ENCODE measurements at regions of chr7 and their contacts with region 1.

Region 1: GRCh38 chr7:92134271-92135051 is at the start of gene CYP51A1:
- DNase-seq: peak; percentile 93 to 94
- H3K4me3 ChIP-seq: peak within 1 kb of the TSS; percentile 99
- H3K4me3 Mint-ChIP-seq: peak within 1 kb of the TSS; percentile 95
- H3K27ac Mint-ChIP-seq: peak within 1 kb of the TSS; percentile 98
- H3K4me1 ChIP-seq: peaks cover 9% of the 10 kb centered on the region; the same call in 1 of the 2 replicates
- H3K4me1 Mint-ChIP-seq: peaks cover 18% of the 10 kb centered on the region
- H3K27me3 ChIP-seq: no peaks in the 10 kb centered on the region
- H3K27me3 Mint-ChIP-seq: no peaks in the 10 kb centered on the region
- CTCF ChIP-seq: peak in 1 of 2 experiments; percentile 6
- total RNA-seq, gene CYP51A1: 151 and 153 TPM in 2 replicates

Region 2: DNA sequence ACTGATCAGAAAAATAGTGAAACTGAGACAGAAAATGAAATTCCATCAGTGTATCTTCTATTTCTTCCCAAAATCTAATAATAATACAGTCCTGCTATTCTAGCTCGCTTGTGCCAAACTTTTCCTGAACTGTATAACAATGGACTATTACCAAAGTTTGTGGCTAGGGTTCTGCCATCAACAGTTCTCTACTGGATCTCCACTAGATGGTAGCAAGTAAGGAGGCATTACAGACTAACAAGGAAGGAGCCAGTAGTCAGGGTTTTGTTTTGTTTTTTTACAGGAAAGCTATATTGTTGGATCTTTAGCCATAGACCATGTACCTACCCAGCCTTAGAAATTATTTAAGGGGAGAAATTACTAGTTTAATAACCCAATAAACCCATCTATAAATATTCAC is 264.8 kb before region 1 on chr7:
- CTCF ChIA-PET with region 1: no interaction called
- POLR2A ChIA-PET with region 1: no interaction called
- intact Hi-C with region 1: no loop called
- DNase-seq: no peak
- H3K4me3 ChIP-seq: no peak overlapping the region
- H3K4me3 Mint-ChIP-seq: no peak overlapping the region
- H3K27ac Mint-ChIP-seq: no peak overlapping the region
- H3K4me1 ChIP-seq: no peaks in the 10 kb centered on the region
- H3K4me1 Mint-ChIP-seq: no peaks in the 10 kb centered on the region
- H3K27me3 ChIP-seq: no peaks in the 10 kb centered on the region
- H3K27me3 Mint-ChIP-seq: no peaks in the 10 kb centered on the region
- CTCF ChIP-seq: no peak

Region 3: DNA sequence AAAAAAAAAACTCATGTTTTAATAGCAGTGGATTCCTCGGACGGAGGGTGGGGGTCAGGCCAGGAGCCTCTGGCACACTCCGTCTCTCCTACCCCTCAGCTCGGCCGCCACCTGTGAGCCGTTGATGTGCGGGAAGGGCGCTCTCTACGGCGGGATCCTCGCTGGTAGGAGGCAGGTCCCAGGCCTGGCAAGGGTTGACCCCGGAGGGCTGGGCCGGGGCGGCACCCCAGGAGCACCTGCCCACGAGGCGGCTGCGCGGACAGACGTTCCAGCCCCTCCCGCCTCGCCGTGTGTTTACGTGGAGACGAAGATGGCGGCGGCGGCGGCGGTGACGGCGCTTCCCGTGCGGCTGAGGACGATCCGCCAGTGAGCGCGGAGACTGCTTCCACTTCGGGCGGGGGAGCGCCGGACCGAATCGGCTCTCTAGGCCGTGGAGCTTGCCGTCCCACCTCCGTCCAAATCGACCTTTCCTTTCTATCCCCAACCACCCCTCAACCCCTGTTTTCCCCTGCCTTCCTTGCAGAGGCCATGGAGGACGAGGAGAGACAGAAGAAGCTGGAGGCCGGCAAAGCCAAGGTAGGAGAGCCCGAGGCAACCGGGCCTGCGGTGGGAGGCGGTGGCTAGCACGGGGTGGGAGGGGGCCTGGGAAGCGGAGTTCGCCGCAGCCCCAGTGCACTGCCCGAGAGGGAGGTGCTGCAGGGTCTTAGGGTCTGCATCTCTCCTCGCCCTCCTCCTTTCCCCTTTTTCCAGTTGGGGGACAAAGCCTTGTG is 193.7 kb before region 1 on chr7 and contains the start of gene AKAP9:
- CTCF ChIA-PET with region 1: interaction called, 5 read pairs
- POLR2A ChIA-PET with region 1: no interaction called
- intact Hi-C with region 1: loop called (anchors 1 kb)
- DNase-seq: peak; percentile 95 to 96
- H3K4me3 ChIP-seq: peak within 1 kb of the TSS; percentile 76
- H3K4me3 Mint-ChIP-seq: peak within 1 kb of the TSS; percentile 95
- H3K27ac Mint-ChIP-seq: peak within 1 kb of the TSS; percentile 98
- H3K4me1 ChIP-seq: peaks cover 12% of the 10 kb centered on the region
- H3K4me1 Mint-ChIP-seq: peaks cover 16% of the 10 kb centered on the region
- H3K27me3 ChIP-seq: no peaks in the 10 kb centered on the region
- H3K27me3 Mint-ChIP-seq: no peaks in the 10 kb centered on the region
- CTCF ChIP-seq: no peak
- total RNA-seq, gene AKAP9: 73.8 and 79.4 TPM in 2 replicates

Region 4: GRCh38 chr7:92075434-92076158 is 58.9 kb before region 1 on chr7:
- CTCF ChIA-PET with region 1: no interaction called
- POLR2A ChIA-PET with region 1: no interaction called
- intact Hi-C with region 1: loop called (anchors 2 kb)
- DNase-seq: peak in 1 of 2 experiments; percentile 3
- H3K4me3 ChIP-seq: no peak overlapping the region
- H3K4me3 Mint-ChIP-seq: no peak overlapping the region
- H3K27ac Mint-ChIP-seq: peak overlapping the region; percentile 74
- H3K4me1 ChIP-seq: peaks cover 17% of the 10 kb centered on the region
- H3K4me1 Mint-ChIP-seq: peaks cover 7% of the 10 kb centered on the region
- H3K27me3 ChIP-seq: no peaks in the 10 kb centered on the region
- H3K27me3 Mint-ChIP-seq: no peaks in the 10 kb centered on the region
- CTCF ChIP-seq: no peak

Region 5: DNA sequence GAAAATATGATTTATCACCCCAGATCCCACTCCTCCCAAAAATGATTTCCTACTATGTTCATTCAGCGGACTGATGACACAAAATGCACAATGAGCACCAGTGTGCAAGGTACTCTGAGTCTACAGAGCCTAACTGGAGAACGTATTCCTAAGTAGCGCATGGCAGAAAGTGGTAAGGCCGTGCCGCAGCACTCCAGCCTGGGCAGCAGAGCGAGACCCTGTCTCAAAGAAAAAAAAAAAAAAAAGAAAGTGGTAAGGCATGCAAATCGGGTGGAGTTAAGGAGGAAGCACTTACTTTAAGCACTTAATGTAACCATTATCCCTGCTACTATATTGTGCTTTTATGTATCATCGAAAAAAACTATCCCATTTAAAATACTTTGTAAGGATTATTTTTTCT is 25.6 kb before region 1 on chr7:
- CTCF ChIA-PET with region 1: no interaction called
- POLR2A ChIA-PET with region 1: no interaction called
- intact Hi-C with region 1: no loop called
- DNase-seq: no peak
- H3K4me3 ChIP-seq: no peak overlapping the region
- H3K4me3 Mint-ChIP-seq: no peak overlapping the region
- H3K27ac Mint-ChIP-seq: no peak overlapping the region
- H3K4me1 ChIP-seq: no peaks in the 10 kb centered on the region
- H3K4me1 Mint-ChIP-seq: peaks cover 11% of the 10 kb centered on the region
- H3K27me3 ChIP-seq: no peaks in the 10 kb centered on the region
- H3K27me3 Mint-ChIP-seq: no peaks in the 10 kb centered on the region
- CTCF ChIP-seq: no peak

Region 6: DNA sequence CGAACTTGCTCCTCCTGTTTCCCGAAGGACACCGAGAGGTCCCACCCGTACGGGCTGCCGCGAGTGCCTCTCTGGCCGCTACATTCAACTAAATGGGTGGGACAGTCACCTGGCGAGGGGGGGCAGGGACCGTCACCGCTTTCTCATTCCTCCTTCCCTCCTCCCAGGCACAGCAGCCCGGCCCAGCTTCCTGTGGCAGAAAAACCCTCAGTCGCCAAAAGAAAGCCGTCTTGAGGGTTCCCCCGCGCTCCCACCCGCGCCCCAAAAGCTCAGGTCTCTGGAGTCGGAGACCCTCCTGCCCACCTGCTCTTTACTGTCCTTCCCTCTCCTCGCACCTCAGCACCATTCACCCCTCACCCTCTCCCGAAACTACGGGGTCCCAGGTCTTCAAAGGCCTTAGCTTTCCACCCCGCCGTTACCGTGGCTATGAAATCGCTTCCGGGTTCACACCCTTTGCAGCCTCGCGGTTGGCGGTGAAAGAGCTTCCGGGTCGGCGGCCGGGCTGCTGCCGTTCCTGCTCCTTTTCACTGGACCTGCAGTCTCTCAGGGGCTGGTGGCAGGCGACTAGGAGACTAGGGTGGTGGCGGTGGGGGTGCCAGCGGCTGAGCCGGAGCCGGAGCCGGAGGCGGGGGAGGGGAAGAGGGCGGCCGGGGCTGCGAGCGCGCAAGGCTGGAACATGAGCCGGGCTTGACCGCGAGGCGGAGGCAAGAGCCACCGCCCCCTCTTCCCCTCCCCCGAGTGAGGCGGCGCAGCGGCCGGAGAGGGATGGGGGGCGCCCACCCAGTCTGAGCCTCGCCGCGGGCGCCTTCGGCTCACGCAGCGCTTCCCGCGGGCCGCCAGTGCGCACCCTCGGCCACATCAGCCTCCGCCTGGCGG is 111.3 kb after region 1 on chr7 and contains the starts of genes ANKIB1 and KRIT1:
- CTCF ChIA-PET with region 1: interaction called, 3 read pairs
- POLR2A ChIA-PET with region 1: interaction called, 4 read pairs
- intact Hi-C with region 1: loop called (anchors 1 kb)
- DNase-seq: peak; percentile 91 to 92
- H3K4me3 ChIP-seq: peak within 1 kb of the TSS; percentile 94
- H3K4me3 Mint-ChIP-seq: peak within 1 kb of the TSS; percentile 98
- H3K27ac Mint-ChIP-seq: peak within 1 kb of the TSS; percentile 99
- H3K4me1 ChIP-seq: peaks cover 16% of the 10 kb centered on the region
- H3K4me1 Mint-ChIP-seq: peaks cover 13% of the 10 kb centered on the region
- H3K27me3 ChIP-seq: no peaks in the 10 kb centered on the region
- H3K27me3 Mint-ChIP-seq: no peaks in the 10 kb centered on the region
- CTCF ChIP-seq: peak; percentile 1 to 31
- total RNA-seq, gene ANKIB1: 56.6 and 57.2 TPM in 2 replicates
- total RNA-seq, gene KRIT1: 50.3 and 54.4 TPM in 2 replicates

Region 7: DNA sequence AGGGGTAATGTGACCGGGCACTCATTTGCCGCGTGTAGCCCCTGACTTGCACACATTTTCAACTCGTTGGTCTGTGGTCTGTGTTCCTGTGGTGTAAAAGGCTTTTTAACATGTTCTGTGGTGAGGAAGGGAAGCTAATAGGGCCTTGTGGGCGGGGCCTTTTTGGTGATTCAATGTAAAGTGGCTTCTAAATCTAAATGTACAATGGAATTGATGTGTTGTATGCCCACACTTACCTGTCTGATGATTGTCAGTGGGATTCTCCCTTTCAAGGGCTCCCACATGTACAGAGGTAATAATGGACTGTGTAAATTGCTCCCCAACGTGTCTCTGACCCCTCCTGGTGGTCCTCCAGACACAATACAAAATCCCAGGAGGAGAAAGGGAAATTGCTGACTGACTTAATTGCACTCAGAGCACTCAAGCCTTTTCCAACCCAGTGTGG is 269.7 kb after region 1 on chr7:
- CTCF ChIA-PET with region 1: no interaction called
- POLR2A ChIA-PET with region 1: no interaction called
- intact Hi-C with region 1: no loop called
- DNase-seq: no peak
- H3K4me3 ChIP-seq: no peak overlapping the region
- H3K4me3 Mint-ChIP-seq: no peak overlapping the region
- H3K27ac Mint-ChIP-seq: no peak overlapping the region
- H3K4me1 ChIP-seq: no peaks in the 10 kb centered on the region
- H3K4me1 Mint-ChIP-seq: no peaks in the 10 kb centered on the region
- H3K27me3 ChIP-seq: no peaks in the 10 kb centered on the region
- H3K27me3 Mint-ChIP-seq: no peaks in the 10 kb centered on the region
- CTCF ChIP-seq: peak in 1 of 2 experiments; percentile 10

Measured in Caco-2 (cell line).